Activated CD8-positive, alpha-beta memory T cell treated with anti-CD3 and anti-CD28 coated beads, Interleukin-2, amount 10 ng/mL, durations not matched to agents 7 days and 5 days (primary cell): ENCODE measurements at regions of chr18 and their contacts with region 1.

Region 1: GRCh38 chr18:21600526-21601410 is at the start of gene ESCO1:
- DNase-seq: peak; percentile 98
- ATAC-seq: peak; percentile 90
- H3K4me3 Mint-ChIP-seq: peak within 1 kb of the TSS; percentile 90
- H3K27ac Mint-ChIP-seq: peak within 1 kb of the TSS; percentile 94
- H3K4me1 Mint-ChIP-seq: peaks cover 38% of the 10 kb centered on the region
- H3K27me3 Mint-ChIP-seq: no peaks in the 10 kb centered on the region
- total RNA-seq, gene ESCO1: 19.2 to 21.1 TPM

Region 2: DNA sequence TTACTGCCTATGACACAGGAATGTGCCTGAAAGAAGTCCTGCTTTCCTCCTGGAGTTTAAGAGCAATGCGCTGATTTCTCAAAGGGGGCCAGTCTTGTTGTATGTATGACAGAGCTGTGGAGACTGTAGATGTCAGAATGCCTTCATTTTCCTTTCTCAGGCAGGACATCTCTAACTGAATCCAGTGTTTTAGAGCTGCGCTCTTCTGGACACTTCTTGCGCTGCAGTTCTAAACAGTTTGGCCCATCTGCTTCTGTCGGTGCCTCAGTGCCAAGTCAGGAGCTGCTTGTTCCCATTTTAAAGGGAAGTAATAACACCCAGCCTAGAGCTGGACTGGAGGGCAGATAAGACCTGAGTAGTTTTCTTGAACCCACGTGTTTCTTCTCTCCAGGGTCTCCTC is 91.7 kb before region 1 on chr18:
- CTCF ChIA-PET with region 1: no interaction called
- DNase-seq: no peak
- ATAC-seq: no peak
- H3K4me3 Mint-ChIP-seq: no peak overlapping the region
- H3K27ac Mint-ChIP-seq: no peak overlapping the region
- H3K4me1 Mint-ChIP-seq: no peaks in the 10 kb centered on the region
- H3K27me3 Mint-ChIP-seq: no peaks in the 10 kb centered on the region

Region 3: DNA sequence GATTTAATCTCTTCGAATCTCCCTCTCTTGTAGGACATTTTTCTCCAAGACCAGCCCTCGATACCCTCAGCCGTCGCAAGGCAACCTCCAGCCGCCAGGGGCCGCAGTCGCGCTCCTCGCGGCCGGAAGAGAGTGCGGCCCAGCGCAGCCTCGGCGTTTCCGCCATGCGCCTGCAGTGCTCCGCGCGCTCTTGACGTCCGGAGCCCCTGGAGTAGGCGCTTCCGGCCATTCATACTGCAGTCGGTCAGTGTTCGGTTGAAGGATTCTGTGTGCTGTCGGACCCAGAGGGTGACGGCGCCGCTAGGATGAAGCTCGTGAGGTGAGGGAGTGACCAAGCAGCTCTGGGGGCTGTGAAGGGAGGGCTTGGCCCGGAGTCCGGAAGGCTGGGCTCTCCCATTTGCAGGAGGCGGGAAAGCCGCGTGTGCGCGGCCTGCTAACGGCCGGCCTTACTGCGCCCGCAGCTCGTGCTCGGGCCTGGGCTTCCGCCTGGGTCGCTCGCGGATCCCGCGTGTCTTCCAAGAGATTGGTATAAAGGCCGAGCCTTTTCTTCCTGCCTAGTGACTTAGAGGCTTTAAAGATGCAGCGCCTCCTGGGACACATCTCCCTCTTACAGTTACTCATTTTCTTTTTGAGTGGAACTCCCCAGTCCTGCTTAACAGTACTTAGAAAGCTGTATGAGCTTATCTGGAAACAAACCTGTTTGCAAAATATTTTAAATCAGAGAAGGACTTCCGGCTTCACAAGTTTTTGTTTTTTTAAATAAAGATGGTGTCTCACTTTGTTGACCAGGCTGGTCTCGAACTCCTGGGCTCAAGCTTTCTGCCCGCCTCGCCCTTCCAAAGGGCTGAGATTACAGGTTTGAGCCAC is 11.6 kb after region 1 on chr18 and contains the start of gene SNRPD1:
- CTCF ChIA-PET with region 1: interaction called, 113 read pairs
- DNase-seq: peak; percentile 92
- ATAC-seq: peak; percentile 97
- H3K4me3 Mint-ChIP-seq: peak within 1 kb of the TSS; percentile 88
- H3K27ac Mint-ChIP-seq: peak within 1 kb of the TSS; percentile 98
- H3K4me1 Mint-ChIP-seq: peaks cover 32% of the 10 kb centered on the region
- H3K27me3 Mint-ChIP-seq: no peaks in the 10 kb centered on the region
- total RNA-seq, gene SNRPD1: 110 to 114 TPM

Region 4: DNA sequence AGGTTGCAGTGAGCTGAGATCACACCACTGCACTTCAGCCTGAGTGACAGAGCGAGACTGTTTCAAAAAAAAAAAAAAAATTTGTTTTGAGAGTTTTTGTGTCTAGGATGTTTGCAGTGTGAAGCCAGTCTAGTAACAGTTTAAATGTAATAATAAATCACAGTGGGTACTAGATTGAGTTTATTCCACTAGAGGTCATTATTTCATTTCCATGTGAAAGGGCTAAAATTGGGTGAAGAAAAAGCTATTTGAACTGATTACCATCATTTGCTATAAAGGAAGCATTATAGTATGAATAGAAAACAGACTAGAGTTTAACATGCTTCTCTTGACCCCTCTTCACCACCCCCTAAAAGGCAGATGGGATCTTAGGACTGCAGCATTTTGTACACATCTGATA is 31.6 kb after region 1 on chr18:
- CTCF ChIA-PET with region 1: interaction called, 10 read pairs
- DNase-seq: no peak
- ATAC-seq: no peak
- H3K4me3 Mint-ChIP-seq: no peak overlapping the region
- H3K27ac Mint-ChIP-seq: no peak overlapping the region
- H3K4me1 Mint-ChIP-seq: peaks cover 16% of the 10 kb centered on the region
- H3K27me3 Mint-ChIP-seq: no peaks in the 10 kb centered on the region

Region 5: GRCh38 chr18:21682371-21683051 is 81.7 kb after region 1 on chr18:
- CTCF ChIA-PET with region 1: interaction called, 15 read pairs
- DNase-seq: peak; percentile 46
- ATAC-seq: peak; percentile 95
- H3K4me3 Mint-ChIP-seq: no peak overlapping the region
- H3K27ac Mint-ChIP-seq: no peak overlapping the region
- H3K4me1 Mint-ChIP-seq: peaks cover 16% of the 10 kb centered on the region
- H3K27me3 Mint-ChIP-seq: no peaks in the 10 kb centered on the region

Region 6: GRCh38 chr18:21704603-21705364 is 104.0 kb after region 1 on chr18 and contains the start of gene ABHD3:
- CTCF ChIA-PET with region 1: interaction called, 17 read pairs
- DNase-seq: peak; percentile 95
- ATAC-seq: peak; percentile 96
- H3K4me3 Mint-ChIP-seq: peak within 1 kb of the TSS; percentile 97
- H3K27ac Mint-ChIP-seq: peak within 1 kb of the TSS; percentile 95
- H3K4me1 Mint-ChIP-seq: peaks cover 27% of the 10 kb centered on the region
- H3K27me3 Mint-ChIP-seq: no peaks in the 10 kb centered on the region
- total RNA-seq, gene ABHD3: 47.9 to 62.6 TPM

Region 7: GRCh38 chr18:21740724-21741510 is 140.1 kb after region 1 on chr18 and contains the start of gene MIB1:
- CTCF ChIA-PET with region 1: interaction called, 15 read pairs
- DNase-seq: no peak
- ATAC-seq: peak; percentile 72
- H3K4me3 Mint-ChIP-seq: peak within 1 kb of the TSS; percentile 97
- H3K27ac Mint-ChIP-seq: peak within 1 kb of the TSS; percentile 95
- H3K4me1 Mint-ChIP-seq: peaks cover 45% of the 10 kb centered on the region
- H3K27me3 Mint-ChIP-seq: no peaks in the 10 kb centered on the region
- total RNA-seq, gene MIB1: 40.5 to 54.8 TPM